ENCODE measurements at regions of chr15 and their contacts with region 1.

Region 1: GRCh38 chr15:58070801-58071418 is 5.4 kb upstream of the ALDH1A2 start:
- DNase-seq: peak; percentile 67
- H3K4me3 Mint-ChIP-seq: no peak overlapping the region
- H3K27ac Mint-ChIP-seq: no peak overlapping the region
- H3K4me1 Mint-ChIP-seq: peaks cover 4% of the 10 kb centered on the region
- H3K27me3 Mint-ChIP-seq: peaks cover 47% of the 10 kb centered on the region

Region 2: DNA sequence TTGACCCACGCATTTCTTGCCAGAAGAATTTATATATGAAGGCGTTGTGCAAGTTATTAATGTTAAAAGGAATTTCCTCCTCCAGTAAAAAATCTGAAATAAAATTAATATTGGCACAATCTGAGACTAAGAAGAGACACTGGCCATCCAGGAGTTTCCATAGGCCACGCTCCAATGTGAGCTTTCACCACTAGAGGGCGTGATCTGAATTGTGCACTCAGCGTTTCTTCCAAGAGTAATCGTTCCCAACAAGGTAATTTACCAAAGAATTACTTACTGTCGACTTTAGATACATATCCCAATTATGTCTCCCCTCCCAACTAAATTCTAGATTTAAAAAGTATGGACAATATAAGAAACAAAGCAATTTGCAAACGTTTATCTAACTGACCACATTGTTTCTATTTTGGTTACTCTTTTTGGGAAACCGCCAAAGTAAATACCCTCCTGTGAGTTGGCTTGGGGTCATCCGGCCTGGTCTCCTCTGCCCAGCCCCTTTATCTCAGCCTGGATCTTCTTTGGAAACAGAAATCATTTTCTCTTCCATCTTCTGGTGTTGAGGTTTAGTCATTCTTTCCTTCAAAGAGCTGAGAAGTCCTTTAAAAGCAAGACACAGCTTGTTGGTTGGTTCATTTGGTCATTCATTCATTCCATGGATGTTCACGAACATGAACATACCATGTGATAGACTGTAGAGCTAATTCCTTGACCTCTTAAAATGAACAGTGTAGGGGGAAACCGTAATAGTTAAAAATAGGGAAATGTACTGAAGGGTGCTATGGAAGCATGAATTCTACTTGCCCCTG is 338.2 kb before region 1 on chr15:
- CTCF ChIA-PET with region 1: interaction called, 10 read pairs
- DNase-seq: peak; percentile 66
- H3K4me3 Mint-ChIP-seq: no peak overlapping the region
- H3K27ac Mint-ChIP-seq: no peak overlapping the region
- H3K4me1 Mint-ChIP-seq: peaks cover 7% of the 10 kb centered on the region
- H3K27me3 Mint-ChIP-seq: no peaks in the 10 kb centered on the region

Region 3: GRCh38 chr15:57751177-57751800 is 319.6 kb before region 1 on chr15:
- CTCF ChIA-PET with region 1: interaction called, 21 read pairs
- DNase-seq: no peak
- H3K4me3 Mint-ChIP-seq: no peak overlapping the region
- H3K27ac Mint-ChIP-seq: no peak overlapping the region
- H3K4me1 Mint-ChIP-seq: peaks cover 8% of the 10 kb centered on the region
- H3K27me3 Mint-ChIP-seq: no peaks in the 10 kb centered on the region

Region 4: DNA sequence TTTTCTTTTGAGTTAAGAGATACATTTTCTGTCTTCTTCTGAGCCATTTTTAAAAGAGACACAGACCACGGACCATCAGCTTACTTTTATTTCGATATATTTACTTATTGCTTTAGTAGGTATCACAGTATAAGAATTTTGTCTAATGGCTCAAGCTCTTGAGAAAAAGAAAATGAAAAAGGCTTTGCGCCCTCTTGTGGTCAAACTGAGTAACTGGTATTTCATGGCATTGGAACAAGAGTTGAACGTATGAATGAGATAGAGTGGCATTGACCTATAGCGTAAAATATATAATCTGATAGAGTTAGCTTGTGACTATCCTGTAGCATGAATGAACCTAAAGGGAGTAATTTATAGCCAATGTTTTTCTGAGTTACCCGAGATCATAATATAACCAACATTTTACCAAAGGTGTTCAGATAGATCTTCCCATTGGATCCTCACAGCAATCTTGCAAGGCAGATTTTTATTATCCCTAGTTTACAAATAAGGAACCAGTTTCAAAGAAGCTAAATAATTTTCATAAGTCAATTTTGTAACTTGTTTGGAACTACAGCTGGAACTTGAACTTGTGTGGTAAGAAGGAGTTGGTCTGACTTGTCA is 209.8 kb before region 1 on chr15:
- CTCF ChIA-PET with region 1: interaction called, 12 read pairs
- DNase-seq: peak; percentile 46
- H3K4me3 Mint-ChIP-seq: no peak overlapping the region
- H3K27ac Mint-ChIP-seq: no peak overlapping the region
- H3K4me1 Mint-ChIP-seq: peaks cover 15% of the 10 kb centered on the region
- H3K27me3 Mint-ChIP-seq: peaks cover 30% of the 10 kb centered on the region

Region 5: GRCh38 chr15:57866149-57866736 is 204.7 kb before region 1 on chr15:
- CTCF ChIA-PET with region 1: interaction called, 12 read pairs
- DNase-seq: peak; percentile 72
- H3K4me3 Mint-ChIP-seq: no peak overlapping the region
- H3K27ac Mint-ChIP-seq: no peak overlapping the region
- H3K4me1 Mint-ChIP-seq: peaks cover 10% of the 10 kb centered on the region
- H3K27me3 Mint-ChIP-seq: peaks cover 46% of the 10 kb centered on the region

Region 6: DNA sequence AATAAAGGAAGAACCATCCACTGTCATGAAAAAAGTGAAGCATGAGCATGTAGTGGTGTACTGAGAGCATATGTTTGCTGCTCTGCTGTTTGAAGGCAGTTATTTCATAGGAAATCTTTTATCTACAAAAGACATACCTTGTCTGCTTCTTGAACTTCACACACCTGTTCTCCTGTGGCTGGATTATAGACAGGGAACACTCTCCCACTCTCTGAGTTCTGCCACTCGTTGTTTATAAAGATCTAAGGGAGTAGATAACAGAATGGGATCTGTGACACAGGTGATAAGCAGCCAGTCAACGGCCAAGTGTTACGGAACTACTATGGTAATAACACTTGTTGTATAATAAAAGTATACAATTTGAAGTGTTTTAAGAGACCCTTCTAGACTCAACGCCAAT is 56.9 kb before region 1 on chr15:
- CTCF ChIA-PET with region 1: no interaction called
- DNase-seq: no peak
- H3K4me3 Mint-ChIP-seq: no peak overlapping the region
- H3K27ac Mint-ChIP-seq: no peak overlapping the region
- H3K4me1 Mint-ChIP-seq: no peaks in the 10 kb centered on the region
- H3K27me3 Mint-ChIP-seq: peaks cover 20% of the 10 kb centered on the region

Region 7: GRCh38 chr15:58182460-58183163 is 111.7 kb after region 1 on chr15:
- CTCF ChIA-PET with region 1: interaction called, 10 read pairs
- DNase-seq: peak; percentile 46
- H3K4me3 Mint-ChIP-seq: no peak overlapping the region
- H3K27ac Mint-ChIP-seq: no peak overlapping the region
- H3K4me1 Mint-ChIP-seq: no peaks in the 10 kb centered on the region
- H3K27me3 Mint-ChIP-seq: peaks cover 32% of the 10 kb centered on the region